Activated naive CD4-positive, alpha-beta T cell treated with anti-CD3 and anti-CD28 coated beads for 36 hours (primary cell): ENCODE measurements at regions of chr14 and their contacts with region 1.

Region 1: GRCh38 chr14:98227000-98227726 is 1044.8 kb downstream of the BCL11B start:
- DNase-seq: peak; percentile 67
- H3K4me3 Mint-ChIP-seq: peak overlapping the region; percentile 51
- H3K27ac Mint-ChIP-seq: peak overlapping the region; percentile 93
- H3K4me1 Mint-ChIP-seq: peaks cover 86% of the 10 kb centered on the region
- H3K27me3 Mint-ChIP-seq: no peaks in the 10 kb centered on the region

Region 2: DNA sequence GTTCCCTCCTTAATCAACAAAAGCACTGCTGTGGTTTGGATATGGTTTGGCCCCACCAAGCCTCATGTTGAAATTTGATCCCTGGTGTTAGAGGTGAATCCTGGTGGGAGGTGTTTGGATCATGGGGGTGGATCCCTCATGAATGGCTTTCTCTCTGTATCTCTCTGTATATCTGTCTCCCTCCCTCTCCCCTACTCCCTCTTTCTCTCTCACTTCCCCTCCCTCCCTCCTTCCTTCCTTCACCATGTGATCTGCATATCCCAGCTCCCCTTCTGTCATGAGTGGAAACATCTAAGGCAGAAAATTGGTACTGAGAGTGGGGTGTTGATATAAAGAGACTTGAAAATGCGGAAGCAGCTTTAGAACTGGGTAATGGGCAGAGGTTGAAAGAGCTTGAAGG is 1858.6 kb before region 1 on chr14:
- CTCF ChIA-PET with region 1: no interaction called
- intact Hi-C with region 1: no loop called
- DNase-seq: no peak
- H3K4me3 Mint-ChIP-seq: no peak overlapping the region
- H3K27ac Mint-ChIP-seq: no peak overlapping the region
- H3K4me1 Mint-ChIP-seq: peaks cover 39% of the 10 kb centered on the region
- H3K27me3 Mint-ChIP-seq: no peaks in the 10 kb centered on the region

Region 3: GRCh38 chr14:97581016-97581415 is 646.1 kb before region 1 on chr14:
- CTCF ChIA-PET with region 1: no interaction called
- intact Hi-C with region 1: no loop called
- DNase-seq: peak; percentile 30
- H3K4me3 Mint-ChIP-seq: no peak overlapping the region
- H3K27ac Mint-ChIP-seq: no peak overlapping the region
- H3K4me1 Mint-ChIP-seq: peaks cover 3% of the 10 kb centered on the region
- H3K27me3 Mint-ChIP-seq: no peaks in the 10 kb centered on the region

Region 4: GRCh38 chr14:98182393-98183055 is 44.6 kb before region 1 on chr14:
- CTCF ChIA-PET with region 1: interaction called, 6 read pairs
- intact Hi-C with region 1: loop called (anchors 1 kb)
- DNase-seq: peak; percentile 81
- H3K4me3 Mint-ChIP-seq: peak overlapping the region; percentile 45
- H3K27ac Mint-ChIP-seq: peak overlapping the region; percentile 96
- H3K4me1 Mint-ChIP-seq: peaks cover 92% of the 10 kb centered on the region
- H3K27me3 Mint-ChIP-seq: no peaks in the 10 kb centered on the region

Region 5: DNA sequence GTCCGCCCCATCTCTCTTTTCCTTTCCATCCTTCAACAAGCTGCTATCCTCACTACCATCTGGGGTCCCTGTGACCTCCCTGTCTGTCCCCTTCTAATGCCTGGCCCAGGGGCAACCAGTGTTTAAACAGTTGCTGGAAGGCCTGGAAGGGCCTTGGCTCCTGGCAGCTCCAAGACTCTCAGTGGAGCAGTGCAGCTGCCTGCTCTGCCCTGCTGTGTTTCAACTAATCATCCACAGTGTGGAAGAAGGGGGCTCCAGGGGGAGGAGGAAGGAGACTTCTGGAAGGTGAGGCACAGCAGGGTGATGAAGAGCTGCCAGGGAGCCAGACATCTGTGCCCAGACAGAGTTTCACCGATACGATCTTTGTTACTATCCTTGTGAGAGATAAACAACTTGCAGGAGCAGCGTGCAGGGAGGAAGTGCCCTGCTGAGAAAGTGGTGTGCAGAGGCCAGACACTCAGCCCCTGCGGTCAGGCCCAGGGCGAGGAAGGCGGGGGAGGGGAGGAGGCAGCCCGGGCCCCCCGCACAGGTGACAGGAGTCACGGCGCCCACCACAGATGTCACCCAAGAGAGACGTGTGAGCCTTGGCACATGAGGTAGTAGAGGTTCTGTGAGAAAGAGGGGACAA is 17.0 kb before region 1 on chr14:
- CTCF ChIA-PET with region 1: interaction called, 6 read pairs
- intact Hi-C with region 1: loop called (anchors 1 kb)
- DNase-seq: peak; percentile 65
- H3K4me3 Mint-ChIP-seq: peak overlapping the region; percentile 56
- H3K27ac Mint-ChIP-seq: peak overlapping the region; percentile 88
- H3K4me1 Mint-ChIP-seq: peaks cover 91% of the 10 kb centered on the region
- H3K27me3 Mint-ChIP-seq: no peaks in the 10 kb centered on the region

Region 6: GRCh38 chr14:98280436-98280835 is 53.3 kb after region 1 on chr14:
- CTCF ChIA-PET with region 1: no interaction called
- intact Hi-C with region 1: no loop called
- DNase-seq: no peak
- H3K4me3 Mint-ChIP-seq: no peak overlapping the region
- H3K27ac Mint-ChIP-seq: no peak overlapping the region
- H3K4me1 Mint-ChIP-seq: peaks cover 2% of the 10 kb centered on the region
- H3K27me3 Mint-ChIP-seq: no peaks in the 10 kb centered on the region

Region 7: DNA sequence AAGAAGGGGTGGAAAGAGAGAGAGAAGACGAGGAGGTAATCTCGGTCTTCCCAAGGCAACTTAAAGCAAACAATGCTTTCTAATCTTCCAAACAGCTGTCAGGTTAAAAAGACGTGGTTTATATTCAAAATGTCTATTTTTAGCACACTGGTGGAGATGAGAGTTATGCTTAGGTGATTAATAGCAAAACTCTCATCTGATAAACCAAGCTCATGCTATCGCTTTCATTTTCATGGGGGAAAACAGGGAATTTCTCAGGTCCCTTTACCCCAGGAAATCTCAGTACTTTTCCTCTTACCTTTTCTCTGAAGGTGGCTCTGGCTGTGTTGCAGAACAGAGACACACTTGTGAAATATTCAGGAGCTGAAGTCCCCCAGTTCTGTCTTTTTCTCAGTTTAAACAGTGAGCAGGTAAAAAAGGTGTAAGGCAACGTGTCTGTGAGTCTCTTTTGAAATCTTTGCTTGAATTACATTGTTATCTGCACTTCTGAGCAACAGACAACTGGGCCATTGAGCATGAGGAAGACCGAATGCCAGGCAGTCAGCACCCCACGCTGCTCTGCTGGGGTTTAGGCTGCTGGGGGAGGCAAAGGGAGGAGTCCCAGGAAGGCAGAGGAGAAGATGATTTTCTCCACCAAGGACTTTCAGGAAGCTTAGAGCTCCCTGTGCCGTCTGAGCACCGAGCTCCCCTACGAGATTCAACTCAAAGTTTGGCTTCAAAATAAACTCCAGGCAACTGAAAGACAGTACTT is 285.5 kb after region 1 on chr14:
- CTCF ChIA-PET with region 1: no interaction called
- intact Hi-C with region 1: loop called (anchors 2 kb)
- DNase-seq: no peak
- H3K4me3 Mint-ChIP-seq: peak overlapping the region; percentile 30
- H3K27ac Mint-ChIP-seq: peak overlapping the region; percentile 73
- H3K4me1 Mint-ChIP-seq: peaks cover 40% of the 10 kb centered on the region
- H3K27me3 Mint-ChIP-seq: no peaks in the 10 kb centered on the region

Region 8: GRCh38 chr14:98548071-98548686 is 321.0 kb after region 1 on chr14:
- CTCF ChIA-PET with region 1: no interaction called
- intact Hi-C with region 1: loop called (anchors 2 kb)
- DNase-seq: peak; percentile 69
- H3K4me3 Mint-ChIP-seq: peak overlapping the region; percentile 22
- H3K27ac Mint-ChIP-seq: peak overlapping the region; percentile 91
- H3K4me1 Mint-ChIP-seq: peaks cover 22% of the 10 kb centered on the region
- H3K27me3 Mint-ChIP-seq: no peaks in the 10 kb centered on the region